ENCODE measurements at regions of chr12 and their contacts with region 1.

Region 1: GRCh38 chr12:91382081-91382543 is 199.5 kb upstream of the DCN start:
- DNase-seq: no peak
- H3K4me3 ChIP-seq: peak overlapping the region; percentile 30
- H3K27me3 ChIP-seq: peaks cover 1% of the 10 kb centered on the region; the same call in 1 of the 2 replicates
- CTCF ChIP-seq: peak; percentile 90

Region 2: GRCh38 chr12:91367234-91367849 is 14.8 kb before region 1 on chr12:
- CTCF ChIA-PET with region 1: interaction called, 23 read pairs
- POLR2A ChIA-PET with region 1: no interaction called
- DNase-seq: no peak
- H3K4me3 ChIP-seq: no peak overlapping the region
- H3K27me3 ChIP-seq: no peaks in the 10 kb centered on the region
- CTCF ChIP-seq: peak; percentile 62

Region 3: GRCh38 chr12:91400271-91400670 is 18.2 kb after region 1 on chr12:
- CTCF ChIA-PET with region 1: interaction called, 11 read pairs
- POLR2A ChIA-PET with region 1: no interaction called
- DNase-seq: no peak
- H3K4me3 ChIP-seq: no peak overlapping the region
- H3K27me3 ChIP-seq: no peaks in the 10 kb centered on the region
- CTCF ChIP-seq: no peak

Region 4: GRCh38 chr12:91493308-91493707 is 111.2 kb after region 1 on chr12:
- CTCF ChIA-PET with region 1: no interaction called
- POLR2A ChIA-PET with region 1: no interaction called
- DNase-seq: no peak
- H3K4me3 ChIP-seq: no peak overlapping the region
- H3K27me3 ChIP-seq: no peaks in the 10 kb centered on the region
- CTCF ChIP-seq: no peak

Region 5: DNA sequence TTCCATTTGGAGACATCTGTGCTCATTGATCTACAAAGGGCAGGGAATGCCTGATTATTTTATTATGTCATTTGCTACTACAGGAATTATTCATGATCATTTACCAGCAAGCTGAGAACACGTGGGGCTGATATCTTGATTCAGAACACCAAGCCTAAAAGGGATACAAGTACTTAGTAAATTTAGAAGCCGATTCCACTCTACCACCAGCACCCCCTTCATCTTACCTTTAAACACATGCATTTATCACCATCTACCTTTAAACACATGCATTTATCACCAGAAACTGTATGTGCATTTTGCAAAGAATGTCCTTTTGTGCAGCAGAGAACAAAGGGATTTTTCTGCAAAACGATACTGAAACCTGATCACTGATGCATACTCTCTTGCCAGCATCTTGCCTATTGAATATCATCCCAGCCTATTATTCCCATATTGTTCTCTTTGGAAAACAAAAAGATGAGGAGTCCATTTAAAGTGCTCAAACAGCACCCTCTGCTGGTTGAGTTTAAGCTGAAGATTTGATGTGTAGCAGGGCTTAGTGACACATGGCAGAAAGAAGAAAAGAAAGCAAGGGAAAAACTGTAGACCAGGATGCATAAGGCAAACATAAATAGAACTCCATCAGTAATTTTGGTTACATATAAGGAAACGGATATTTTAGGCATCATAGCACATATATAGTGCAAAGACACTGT is 1188.1 kb after region 1 on chr12:
- CTCF ChIA-PET with region 1: interaction called, 28 read pairs
- POLR2A ChIA-PET with region 1: no interaction called
- DNase-seq: peak; percentile 16
- H3K4me3 ChIP-seq: no peak overlapping the region
- H3K27me3 ChIP-seq: no peaks in the 10 kb centered on the region
- CTCF ChIP-seq: peak; percentile 63

Region 6: GRCh38 chr12:92608151-92609091 is 1226.3 kb after region 1 on chr12:
- CTCF ChIA-PET with region 1: interaction called, 16 read pairs
- POLR2A ChIA-PET with region 1: no interaction called
- DNase-seq: no peak
- H3K4me3 ChIP-seq: no peak overlapping the region
- H3K27me3 ChIP-seq: no peaks in the 10 kb centered on the region
- CTCF ChIP-seq: peak; percentile 69

Region 7: DNA sequence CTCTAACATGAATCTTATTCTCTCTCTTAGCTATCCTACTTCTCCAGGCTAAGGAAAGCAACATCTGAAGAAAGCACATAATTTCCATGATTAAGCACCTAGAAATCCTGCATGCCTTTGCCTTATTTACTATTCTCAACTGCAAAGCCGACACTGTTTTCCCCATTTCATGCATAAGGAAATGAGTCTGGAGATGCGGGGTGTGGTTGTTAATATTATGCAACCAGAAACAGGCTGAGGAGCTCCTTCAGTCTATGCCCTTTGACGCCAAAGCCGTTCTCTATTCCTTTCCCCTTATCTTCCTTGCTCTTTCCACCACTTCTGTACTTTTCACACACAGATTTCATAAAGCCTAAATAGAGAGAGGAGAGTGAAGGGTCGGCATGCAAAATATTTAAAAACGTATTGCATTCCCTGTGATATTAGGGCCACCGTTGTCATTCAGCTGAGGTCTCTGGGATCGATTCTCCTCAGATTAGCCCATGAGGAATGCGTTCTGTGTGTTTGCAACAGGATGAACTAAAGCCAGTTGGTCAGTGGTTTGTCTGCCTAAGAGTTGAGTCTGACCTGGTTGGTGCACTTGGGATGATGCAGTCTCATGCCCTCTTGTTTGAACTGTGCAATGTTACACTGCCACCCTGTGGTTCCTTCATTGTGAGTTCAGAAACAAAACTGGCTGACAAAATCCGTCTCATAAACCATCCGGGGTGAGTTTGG is 1267.6 kb after region 1 on chr12:
- CTCF ChIA-PET with region 1: interaction called, 20 read pairs
- POLR2A ChIA-PET with region 1: interaction called, 3 read pairs
- DNase-seq: peak; percentile 27
- H3K4me3 ChIP-seq: no peak overlapping the region
- H3K27me3 ChIP-seq: no peaks in the 10 kb centered on the region
- CTCF ChIP-seq: peak; percentile 74

Measured in BJ (cell line).